ENCODE measurements at regions of chr1 and their contacts with region 1.

Region 1: DNA sequence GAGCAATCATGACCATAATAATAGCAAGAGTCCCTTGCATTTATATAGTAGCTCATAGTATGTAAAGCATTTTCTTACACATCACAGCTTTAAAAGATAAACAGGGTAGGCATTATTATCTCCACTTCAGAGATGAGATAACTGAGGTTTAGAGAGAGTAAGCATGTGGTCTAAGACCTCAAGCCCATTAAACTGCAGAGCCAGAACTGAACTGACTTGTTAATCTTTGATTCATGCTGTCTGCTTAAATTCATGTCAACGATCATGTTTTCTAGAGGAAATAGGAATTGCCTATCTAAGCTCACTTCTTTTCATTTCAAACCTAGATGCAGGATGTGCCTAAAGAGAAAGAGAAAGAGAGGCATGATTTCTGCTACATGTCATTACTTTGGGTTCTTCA is 524.8 kb downstream of the PTPRC start:
- DNase-seq: no peak
- ATAC-seq: peak; percentile 48
- H3K4me3 Mint-ChIP-seq: no peak overlapping the region
- H3K27ac Mint-ChIP-seq: no peak overlapping the region
- H3K4me1 Mint-ChIP-seq: peaks cover 37% of the 10 kb centered on the region
- H3K27me3 Mint-ChIP-seq: no peaks in the 10 kb centered on the region

Region 2: GRCh38 chr1:198686069-198686728 is 477.5 kb before region 1 on chr1:
- CTCF ChIA-PET with region 1: no interaction called
- POLR2A ChIA-PET with region 1: no interaction called
- intact Hi-C with region 1: no loop called
- DNase-seq: no peak
- ATAC-seq: no peak
- H3K4me3 Mint-ChIP-seq: peak overlapping the region; percentile 53
- H3K27ac Mint-ChIP-seq: peak overlapping the region; percentile 90
- H3K4me1 Mint-ChIP-seq: peaks cover 87% of the 10 kb centered on the region
- H3K27me3 Mint-ChIP-seq: no peaks in the 10 kb centered on the region

Region 3: GRCh38 chr1:199046618-199047017 is 117.1 kb before region 1 on chr1:
- CTCF ChIA-PET with region 1: no interaction called
- POLR2A ChIA-PET with region 1: no interaction called
- intact Hi-C with region 1: no loop called
- DNase-seq: no peak
- ATAC-seq: no peak
- H3K4me3 Mint-ChIP-seq: no peak overlapping the region
- H3K27ac Mint-ChIP-seq: no peak overlapping the region
- H3K4me1 Mint-ChIP-seq: peaks cover 5% of the 10 kb centered on the region
- H3K27me3 Mint-ChIP-seq: no peaks in the 10 kb centered on the region

Region 4: DNA sequence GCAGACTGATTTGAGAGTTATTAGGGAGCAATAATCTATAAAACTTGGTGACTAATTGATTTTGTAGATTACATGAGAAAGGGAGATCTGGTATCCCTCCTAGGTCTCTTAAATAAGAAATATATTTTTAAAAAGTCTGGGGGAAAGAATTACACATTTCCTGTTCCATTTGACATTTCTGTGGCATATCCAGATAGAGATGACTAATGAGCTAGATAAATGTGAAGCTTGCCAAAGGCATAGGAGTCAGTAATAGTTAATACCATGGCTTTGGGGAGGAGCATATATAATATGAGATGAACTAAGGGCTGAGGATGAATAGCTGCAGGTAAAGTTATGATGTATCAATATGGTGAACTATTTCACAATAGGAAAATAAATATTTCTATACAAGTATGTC is 138.9 kb after region 1 on chr1:
- CTCF ChIA-PET with region 1: no interaction called
- POLR2A ChIA-PET with region 1: no interaction called
- intact Hi-C with region 1: loop called in 1 of 2 experiments (anchors 10 kb)
- DNase-seq: no peak
- ATAC-seq: peak; percentile 63
- H3K4me3 Mint-ChIP-seq: no peak overlapping the region
- H3K27ac Mint-ChIP-seq: no peak overlapping the region
- H3K4me1 Mint-ChIP-seq: peaks cover 23% of the 10 kb centered on the region
- H3K27me3 Mint-ChIP-seq: peaks cover 13% of the 10 kb centered on the region

Region 5: GRCh38 chr1:199313434-199313833 is 149.8 kb after region 1 on chr1:
- CTCF ChIA-PET with region 1: no interaction called
- POLR2A ChIA-PET with region 1: no interaction called
- intact Hi-C with region 1: loop called (anchors 5 to 10 kb)
- DNase-seq: no peak
- ATAC-seq: no peak
- H3K4me3 Mint-ChIP-seq: no peak overlapping the region
- H3K27ac Mint-ChIP-seq: no peak overlapping the region
- H3K4me1 Mint-ChIP-seq: peaks cover 24% of the 10 kb centered on the region
- H3K27me3 Mint-ChIP-seq: peaks cover 12% of the 10 kb centered on the region

Measured in activated CD4-positive, alpha-beta T cell treated with anti-CD3 and anti-CD28 coated beads for 36 hours (primary cell).